ENCODE measurements at regions of chr4 and their contacts with region 1.

Region 1: GRCh38 chr4:86927843-86928395 is 6.9 kb upstream of the AFF1 start:
- DNase-seq: no peak
- CTCF ChIP-seq: no peak

Region 2: DNA sequence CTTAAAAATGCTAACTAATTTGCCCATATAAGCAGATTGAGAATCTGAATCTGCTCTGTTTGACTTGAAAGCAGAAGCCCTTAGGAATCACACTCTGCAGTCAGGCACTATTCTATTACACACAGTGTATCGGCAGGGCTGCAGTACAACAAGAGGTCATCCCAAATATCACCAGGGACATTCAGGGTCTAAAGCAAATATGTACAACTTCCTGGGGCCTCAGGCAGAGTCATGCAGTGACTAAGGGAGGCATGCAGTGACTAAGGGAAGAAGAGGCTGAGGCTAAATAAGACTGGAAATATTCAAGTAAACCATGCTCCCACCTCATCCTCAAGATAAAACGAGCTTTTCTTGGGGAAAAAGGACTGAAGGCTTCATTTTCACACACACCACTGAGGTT is 588.9 kb before region 1 on chr4:
- in situ Hi-C with region 1: no loop called
- DNase-seq: no peak
- CTCF ChIP-seq: no peak

Region 3: DNA sequence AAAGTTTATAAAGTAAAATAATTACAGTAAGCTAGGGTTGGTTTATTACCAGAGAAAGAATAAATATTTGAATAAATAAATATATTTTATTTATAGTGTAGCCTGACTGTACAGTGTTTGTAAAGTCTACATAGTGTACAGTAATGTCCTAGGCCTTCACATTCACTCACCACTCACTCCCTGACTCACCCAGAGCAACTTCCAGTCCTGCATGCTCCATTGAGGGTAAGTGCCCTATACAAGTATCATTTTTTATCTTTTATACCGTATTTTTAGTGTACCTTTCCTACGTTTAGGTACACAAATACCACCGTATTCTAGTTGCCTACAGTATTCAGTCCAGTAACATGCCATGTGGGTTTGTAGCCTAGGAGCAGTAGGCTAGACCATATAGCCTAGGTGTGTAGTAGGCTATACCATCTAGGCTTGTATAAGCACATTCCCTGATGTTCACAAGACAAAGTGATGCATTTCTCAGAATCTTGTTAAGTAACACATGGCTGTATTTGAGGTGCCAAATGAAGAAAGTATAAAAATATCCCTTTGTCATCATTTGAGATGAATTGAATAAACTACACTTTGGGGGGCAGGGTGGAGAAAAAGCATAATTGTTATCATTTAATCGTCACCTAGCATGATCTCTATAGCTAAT is 307.2 kb after region 1 on chr4:
- in situ Hi-C with region 1: loop called (anchors 10 kb)
- DNase-seq: no peak
- CTCF ChIP-seq: no peak

Region 4: DNA sequence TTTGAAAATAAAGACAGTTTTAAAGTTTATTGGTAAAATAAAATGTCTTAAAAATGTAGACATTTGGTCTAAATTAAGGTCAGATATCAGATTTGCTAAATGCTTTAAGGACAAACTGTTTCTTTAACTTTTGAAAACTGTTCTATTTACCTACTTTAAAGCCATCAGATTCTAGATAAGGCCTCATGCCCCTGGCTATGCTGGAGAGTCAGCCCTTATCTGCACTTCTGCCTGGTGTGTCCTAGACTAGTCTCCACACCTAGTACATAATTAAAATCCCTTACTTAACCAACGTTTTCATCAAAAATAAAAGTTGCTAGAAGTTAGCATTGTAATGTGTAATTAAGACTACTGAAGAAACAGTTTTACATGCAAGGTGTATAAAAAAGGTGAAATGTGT is 437.4 kb after region 1 on chr4:
- in situ Hi-C with region 1: no loop called
- DNase-seq: no peak
- CTCF ChIP-seq: no peak

Measured in GM13976 (cell line).